HEK293 (cell line): ENCODE measurements at regions of chr15 and their contacts with region 1.

Region 1: GRCh38 chr15:91271565-91272153 is 171.6 kb downstream of the SV2B start:
- H3K4me3 ChIP-seq: no peak overlapping the region
- H3K27ac ChIP-seq: no peak overlapping the region
- H3K4me1 ChIP-seq: no peaks in the 10 kb centered on the region
- CTCF ChIP-seq: peak; percentile 63

Region 2: GRCh38 chr15:91049378-91050127 is 222.1 kb before region 1 on chr15:
- CTCF ChIA-PET with region 1: interaction called, 131 read pairs
- POLR2A ChIA-PET with region 1: no interaction called
- H3K4me3 ChIP-seq: no peak overlapping the region
- H3K27ac ChIP-seq: no peak overlapping the region
- H3K4me1 ChIP-seq: no peaks in the 10 kb centered on the region
- CTCF ChIP-seq: peak; percentile 69

Region 3: GRCh38 chr15:91258425-91258779 is 13.3 kb before region 1 on chr15:
- CTCF ChIA-PET with region 1: interaction called, 28 read pairs
- POLR2A ChIA-PET with region 1: no interaction called
- H3K4me3 ChIP-seq: no peak overlapping the region
- H3K27ac ChIP-seq: no peak overlapping the region
- H3K4me1 ChIP-seq: no peaks in the 10 kb centered on the region
- CTCF ChIP-seq: no peak

Region 4: DNA sequence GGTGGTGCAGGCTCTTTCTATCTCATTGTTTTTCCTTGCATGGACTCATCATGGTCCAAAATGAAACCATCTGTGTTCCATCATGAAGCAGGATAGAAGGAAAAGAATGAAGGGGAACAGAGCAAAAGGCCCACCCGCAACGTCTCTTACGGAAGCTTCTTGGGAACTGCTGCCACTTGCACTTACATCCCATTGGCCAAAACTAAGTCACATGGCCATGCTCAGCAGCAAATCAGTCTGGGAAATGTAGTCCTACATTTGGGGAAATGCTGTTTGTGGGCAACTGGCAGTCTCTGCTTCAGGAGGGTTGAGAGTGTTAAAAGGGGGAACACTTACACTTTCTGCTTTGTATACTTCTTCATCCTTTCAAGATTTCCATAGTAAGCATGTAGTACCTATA is 20.0 kb after region 1 on chr15:
- CTCF ChIA-PET with region 1: interaction called, 16 read pairs
- POLR2A ChIA-PET with region 1: no interaction called
- H3K4me3 ChIP-seq: no peak overlapping the region
- H3K27ac ChIP-seq: no peak overlapping the region
- H3K4me1 ChIP-seq: no peaks in the 10 kb centered on the region
- CTCF ChIP-seq: no peak

Region 5: GRCh38 chr15:91496647-91497354 is 225.1 kb after region 1 on chr15:
- CTCF ChIA-PET with region 1: no interaction called
- POLR2A ChIA-PET with region 1: no interaction called
- H3K4me3 ChIP-seq: no peak overlapping the region
- H3K27ac ChIP-seq: no peak overlapping the region
- H3K4me1 ChIP-seq: no peaks in the 10 kb centered on the region
- CTCF ChIP-seq: no peak